ENCODE measurements at regions of chr15 and their contacts with region 1.

Region 1: GRCh38 chr15:100596792-100597191 is 5.2 kb downstream of the LINS1 start:
- DNase-seq: no peak
- H3K4me3 ChIP-seq: no peak overlapping the region
- H3K27ac ChIP-seq: no peak overlapping the region
- H3K27me3 ChIP-seq: no peaks in the 10 kb centered on the region
- CTCF ChIP-seq: no peak

Region 2: DNA sequence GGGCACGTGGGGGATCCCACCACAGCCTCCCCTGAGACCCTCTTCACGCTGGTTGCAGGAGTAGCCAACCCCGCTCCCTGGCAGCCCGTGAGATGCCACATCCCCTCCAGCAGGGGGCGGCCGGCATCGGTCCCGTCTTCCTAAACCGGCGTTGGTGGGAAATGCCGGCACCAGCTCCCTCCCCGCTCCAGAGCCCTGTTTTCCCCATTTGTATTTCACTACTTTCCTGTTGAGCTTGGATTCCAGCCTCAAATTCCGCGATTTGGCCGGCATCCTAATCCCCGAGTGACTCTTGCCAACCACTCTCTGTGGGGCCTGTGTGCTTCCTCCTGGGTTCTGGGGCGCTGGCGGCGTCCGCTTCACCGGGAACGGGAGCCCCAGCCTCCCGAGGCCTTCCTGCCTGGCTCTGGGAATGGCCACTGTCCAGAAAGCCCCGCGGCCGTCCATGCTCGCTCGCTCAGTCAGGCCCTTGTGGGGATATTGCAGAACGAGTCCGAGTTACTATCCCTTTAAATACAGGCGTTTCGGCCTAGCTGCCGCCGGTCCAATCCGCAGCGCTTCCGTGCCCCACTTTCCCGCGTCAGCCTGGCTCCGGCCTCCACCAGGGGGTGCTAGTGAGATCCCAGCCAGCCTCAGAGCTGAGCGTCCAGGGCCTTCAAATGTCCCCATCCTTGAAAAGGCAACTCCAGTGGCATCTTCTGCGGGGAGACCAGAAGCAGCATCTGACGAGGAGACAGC is 246.9 kb before region 1 on chr15:
- CTCF ChIA-PET with region 1: interaction called, 12 read pairs
- POLR2A ChIA-PET with region 1: no interaction called
- DNase-seq: peak; percentile 38
- H3K4me3 ChIP-seq: peak overlapping the region; percentile 61
- H3K27ac ChIP-seq: no peak overlapping the region
- H3K27me3 ChIP-seq: no peaks in the 10 kb centered on the region
- CTCF ChIP-seq: peak; percentile 77

Measured in AG04450 (cell line).